IMR-90 (cell line): ENCODE measurements at regions of chr15 and their contacts with region 1.

Region 1: GRCh38 chr15:70713714-70714414 is 49.5 kb downstream of the UACA start:
- DNase-seq: peak; percentile 34
- ATAC-seq: peak; percentile 9; the same call in 1 of the 2 replicates
- H3K4me3 ChIP-seq: no peak overlapping the region
- H3K27ac ChIP-seq: no peak overlapping the region
- H3K4me1 ChIP-seq: peaks cover 23% of the 10 kb centered on the region
- H3K27me3 ChIP-seq: no peaks in the 10 kb centered on the region
- CTCF ChIP-seq: no peak
- POLR2A ChIP-seq: no peak
- RAD21 ChIP-seq: no peak

Region 2: DNA sequence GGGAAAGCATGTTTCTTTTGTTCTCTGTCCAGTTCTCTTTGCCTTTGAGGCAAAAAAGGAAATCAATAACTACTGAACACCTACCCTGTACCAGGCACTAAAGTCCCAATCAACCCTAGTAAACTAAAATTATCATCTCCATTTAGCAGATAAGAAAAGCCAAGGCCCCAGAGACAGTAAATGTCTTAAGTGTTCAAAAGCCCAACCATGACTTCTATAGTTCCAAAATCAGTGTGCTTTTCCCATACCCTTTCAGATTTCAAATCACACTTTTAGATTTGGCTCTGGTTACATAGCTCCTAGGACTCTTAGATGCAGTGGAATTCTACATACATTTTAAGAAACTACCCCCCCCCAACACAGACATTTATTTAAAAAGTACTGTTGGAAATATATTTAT is 14.0 kb before region 1 on chr15:
- CTCF ChIA-PET with region 1: interaction called, 5 read pairs
- POLR2A ChIA-PET with region 1: no interaction called
- dilution Hi-C with region 1: no loop called
- in situ Hi-C with region 1: no loop called
- intact Hi-C with region 1: loop called (anchors 2 kb)
- DNase-seq: no peak
- ATAC-seq: no peak
- H3K4me3 ChIP-seq: no peak overlapping the region
- H3K27ac ChIP-seq: no peak overlapping the region
- H3K4me1 ChIP-seq: peaks cover 20% of the 10 kb centered on the region
- H3K27me3 ChIP-seq: no peaks in the 10 kb centered on the region
- CTCF ChIP-seq: no peak
- POLR2A ChIP-seq: no peak
- RAD21 ChIP-seq: no peak

Region 3: DNA sequence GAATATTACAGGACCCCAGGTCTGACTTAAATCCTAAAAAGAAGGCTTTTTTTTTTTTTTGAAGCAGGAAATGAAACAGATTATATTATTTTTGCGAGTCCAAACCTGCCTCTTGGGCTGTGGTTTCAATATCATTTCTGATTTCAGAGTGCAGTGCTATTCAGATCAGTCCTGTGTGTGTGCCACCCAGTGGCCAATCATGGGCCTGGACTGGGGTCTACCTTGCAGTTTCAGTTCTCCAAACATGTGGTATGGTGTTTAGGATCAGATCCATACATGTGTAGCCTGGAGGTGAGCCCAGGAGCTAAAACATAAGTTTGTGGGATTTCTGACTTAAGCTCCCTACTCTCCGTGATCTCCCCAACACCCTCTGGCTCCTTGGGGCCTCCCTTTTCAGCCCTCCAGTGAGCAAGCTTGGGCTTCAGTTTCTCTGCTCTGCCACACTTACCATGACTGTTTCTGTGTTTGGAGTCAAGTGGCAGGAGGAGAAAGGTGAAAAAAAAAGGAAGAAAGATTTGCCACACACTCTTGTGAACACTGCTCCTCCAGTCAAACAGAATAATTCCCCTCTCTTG is 389.3 kb after region 1 on chr15:
- CTCF ChIA-PET with region 1: no interaction called
- POLR2A ChIA-PET with region 1: no interaction called
- dilution Hi-C with region 1: no loop called
- in situ Hi-C with region 1: no loop called
- intact Hi-C with region 1: no loop called
- DNase-seq: peak; percentile 68
- ATAC-seq: peak; percentile 99
- H3K4me3 ChIP-seq: no peak overlapping the region
- H3K27ac ChIP-seq: no peak overlapping the region
- H3K4me1 ChIP-seq: peaks cover 3% of the 10 kb centered on the region; the same call in 1 of the 2 replicates
- H3K27me3 ChIP-seq: no peaks in the 10 kb centered on the region
- CTCF ChIP-seq: peak; percentile 63
- POLR2A ChIP-seq: no peak
- RAD21 ChIP-seq: peak; percentile 67